AG04449 (cell line): ENCODE measurements at regions of chr7 and their contacts with region 1.

Region 1: DNA sequence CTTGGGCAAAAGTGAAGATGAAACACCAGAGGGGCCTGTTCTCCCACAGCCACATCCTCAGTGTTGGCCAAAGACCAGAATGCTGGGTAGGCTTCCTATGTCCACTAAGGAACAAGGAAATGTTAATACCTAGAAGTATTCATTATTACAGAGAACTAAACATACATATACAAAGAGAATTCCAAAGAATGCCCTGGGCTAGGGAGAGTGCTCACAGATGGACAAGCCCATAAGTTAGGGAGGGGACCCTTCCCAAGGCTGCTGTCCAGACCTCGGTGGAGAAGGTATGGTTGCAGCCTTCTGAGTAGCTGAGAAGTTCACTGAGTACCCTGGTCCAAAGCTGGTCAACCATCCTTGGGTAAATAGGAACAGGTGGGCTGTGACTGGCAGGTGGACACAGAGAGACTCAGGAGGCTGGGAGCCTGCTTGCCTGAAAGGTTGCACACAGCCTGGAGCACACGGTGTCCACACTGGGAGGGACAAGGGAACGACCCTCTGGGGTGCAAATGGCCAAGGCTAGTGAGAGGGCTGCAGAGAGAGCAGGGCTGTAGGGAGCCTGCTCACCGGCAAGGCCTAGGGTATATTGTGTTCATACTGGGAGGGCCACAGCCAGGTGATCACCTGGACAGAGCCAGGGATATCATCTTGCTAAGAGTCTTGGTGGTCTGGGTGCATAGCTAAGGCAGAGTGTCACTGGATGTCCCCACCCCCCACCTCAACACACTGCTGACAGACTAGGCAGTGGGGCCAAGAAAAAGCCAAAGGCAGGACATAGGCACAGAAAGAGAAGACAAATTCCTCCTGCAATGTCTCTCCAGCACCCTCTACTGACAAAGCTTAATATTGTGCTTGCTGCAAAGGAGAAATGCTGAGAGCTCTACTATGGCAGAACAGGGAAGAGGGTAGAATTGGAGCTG is 40.3 kb downstream of the CPVL start:
- DNase-seq: no peak
- H3K4me3 ChIP-seq: no peak overlapping the region
- CTCF ChIP-seq: peak; percentile 81

Region 2: DNA sequence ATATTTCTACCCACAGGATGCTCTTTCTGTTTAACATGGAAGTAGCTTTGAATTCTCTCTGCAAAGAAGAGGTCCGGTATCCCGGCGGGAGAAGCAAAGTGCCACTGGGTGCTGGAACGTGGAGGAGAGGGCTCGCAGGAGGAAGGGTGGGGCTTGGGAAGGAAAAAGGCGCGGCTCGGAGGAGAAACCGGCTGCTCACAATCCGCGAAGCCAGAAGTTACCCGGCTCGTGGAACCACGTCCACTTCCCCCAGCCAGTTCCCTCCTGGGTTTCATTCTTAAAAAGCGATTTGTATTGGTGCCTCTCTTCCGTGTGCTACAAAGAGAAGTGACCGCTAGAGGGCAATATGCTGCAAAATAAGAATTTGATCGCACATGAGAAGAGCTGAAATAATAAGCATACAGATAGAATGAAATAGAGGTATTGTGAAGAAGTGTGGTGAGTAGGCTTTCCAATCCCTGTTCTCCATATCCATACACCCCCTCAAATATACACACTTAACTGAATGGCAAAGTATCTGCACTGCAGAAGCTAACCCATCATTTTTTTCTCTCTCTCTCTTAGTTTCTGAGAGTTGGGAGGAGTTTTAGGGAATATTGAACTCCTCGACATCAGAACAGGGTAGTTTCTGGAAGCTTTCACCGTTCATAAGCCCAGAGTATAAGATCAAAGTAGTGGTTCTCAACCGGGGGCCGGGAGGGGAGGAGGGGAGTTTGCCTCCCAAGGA is 179.0 kb before region 1 on chr7:
- CTCF ChIA-PET with region 1: interaction called, 1,392 read pairs
- POLR2A ChIA-PET with region 1: interaction called, 6 read pairs
- DNase-seq: peak; percentile 60
- H3K4me3 ChIP-seq: peak overlapping the region; percentile 72
- CTCF ChIP-seq: peak; percentile 64

Region 3: DNA sequence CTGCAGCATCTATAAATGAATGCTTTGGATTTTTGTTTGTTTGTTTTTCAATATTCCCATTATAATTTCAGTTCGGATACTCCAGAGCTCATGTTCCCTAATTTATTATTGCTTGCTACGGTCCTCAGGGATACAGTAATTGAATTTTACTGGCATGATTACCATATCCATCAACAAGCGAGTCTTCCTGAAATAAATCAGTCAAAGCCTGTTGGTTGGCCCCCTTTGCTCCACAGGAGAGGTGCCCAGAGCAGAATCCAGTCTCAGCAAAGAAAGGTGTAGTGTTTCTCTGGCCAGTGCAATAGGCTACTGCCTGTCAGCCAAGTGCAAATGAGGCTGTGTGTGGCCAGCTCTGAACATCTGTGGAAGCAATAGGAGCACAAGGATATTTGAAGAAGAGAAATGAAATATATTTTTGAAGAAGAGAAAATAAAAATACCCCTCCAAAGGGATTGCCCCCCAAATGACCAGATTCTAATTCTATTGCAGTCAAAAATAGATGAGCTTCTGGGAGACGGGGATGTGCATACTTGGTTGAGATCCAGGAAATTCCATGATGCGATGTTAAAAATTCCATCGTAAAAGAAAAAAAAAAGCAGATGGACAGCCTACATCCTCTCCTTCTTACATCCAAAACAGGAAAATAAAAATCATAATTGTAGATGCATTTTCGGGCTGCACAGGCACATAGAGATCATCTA is 166.0 kb before region 1 on chr7:
- CTCF ChIA-PET with region 1: interaction called, 25 read pairs
- POLR2A ChIA-PET with region 1: no interaction called
- DNase-seq: no peak
- H3K4me3 ChIP-seq: no peak overlapping the region
- CTCF ChIP-seq: no peak

Region 4: DNA sequence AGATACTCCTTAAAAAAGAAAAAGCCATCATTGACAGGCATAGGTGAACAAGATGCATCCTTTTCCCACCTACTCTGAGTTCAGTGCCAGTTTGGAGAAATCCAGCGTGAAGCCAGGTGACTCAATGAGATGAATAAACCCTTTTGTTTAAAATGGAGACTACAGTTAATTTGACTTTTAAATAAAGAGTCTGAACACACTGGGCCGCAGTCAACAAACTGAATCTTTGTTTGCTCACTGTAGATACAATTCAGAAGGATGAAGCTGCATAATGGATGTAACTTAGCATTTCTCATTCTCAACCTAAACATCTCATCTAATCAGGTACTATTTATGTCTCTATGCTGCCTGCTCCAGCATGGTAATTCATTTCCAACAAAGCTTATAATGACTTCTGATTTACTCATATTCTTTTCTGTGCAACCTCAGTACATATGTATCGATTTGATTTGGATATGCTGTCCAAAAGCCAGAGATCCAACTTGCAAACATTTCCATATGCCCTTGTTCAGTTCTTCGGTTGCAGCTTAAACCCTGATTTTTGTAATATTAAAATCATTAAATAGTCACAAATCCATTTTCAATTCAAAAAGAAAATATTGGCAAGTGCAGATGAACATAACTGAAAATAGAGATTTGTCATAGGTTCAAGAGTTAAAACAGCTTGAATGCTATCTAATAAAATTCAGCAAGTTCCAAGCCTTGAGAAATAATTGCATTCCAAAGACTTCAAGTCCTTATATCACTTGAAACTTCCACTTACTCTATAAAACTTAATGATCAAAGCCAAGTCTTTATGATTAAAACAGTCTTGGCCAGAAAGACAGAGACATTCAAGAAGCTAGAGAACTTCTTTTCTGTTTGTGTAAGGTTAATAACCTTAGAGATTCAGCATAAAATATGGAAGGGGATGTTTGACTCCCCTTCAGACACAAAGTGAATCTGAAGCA is 27.4 kb before region 1 on chr7:
- CTCF ChIA-PET with region 1: interaction called, 14 read pairs
- POLR2A ChIA-PET with region 1: no interaction called
- DNase-seq: no peak
- H3K4me3 ChIP-seq: no peak overlapping the region
- CTCF ChIP-seq: no peak

Region 5: DNA sequence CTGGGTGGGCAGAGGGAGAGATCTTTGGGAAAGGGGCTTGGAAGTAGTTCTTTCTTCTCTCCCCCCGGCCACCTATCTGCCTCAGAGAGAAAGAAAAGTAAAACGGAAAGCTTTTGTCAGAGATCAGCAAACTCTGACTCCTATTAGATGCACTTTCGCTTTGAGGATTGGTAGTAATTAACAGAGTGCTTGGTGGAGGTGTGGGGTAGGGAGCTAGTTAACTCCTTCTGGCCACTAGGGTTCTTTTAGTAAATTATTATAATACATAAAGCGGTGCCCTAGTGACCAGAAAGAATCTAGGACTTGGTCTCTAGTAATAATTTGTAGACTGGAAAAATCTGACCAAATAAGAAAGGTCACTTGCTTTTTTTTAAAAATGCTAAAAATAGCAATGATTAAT is 14.3 kb before region 1 on chr7:
- CTCF ChIA-PET with region 1: interaction called, 33 read pairs
- POLR2A ChIA-PET with region 1: no interaction called
- DNase-seq: no peak
- H3K4me3 ChIP-seq: no peak overlapping the region; the same call in 1 of the 2 replicates
- CTCF ChIP-seq: no peak

Region 6: DNA sequence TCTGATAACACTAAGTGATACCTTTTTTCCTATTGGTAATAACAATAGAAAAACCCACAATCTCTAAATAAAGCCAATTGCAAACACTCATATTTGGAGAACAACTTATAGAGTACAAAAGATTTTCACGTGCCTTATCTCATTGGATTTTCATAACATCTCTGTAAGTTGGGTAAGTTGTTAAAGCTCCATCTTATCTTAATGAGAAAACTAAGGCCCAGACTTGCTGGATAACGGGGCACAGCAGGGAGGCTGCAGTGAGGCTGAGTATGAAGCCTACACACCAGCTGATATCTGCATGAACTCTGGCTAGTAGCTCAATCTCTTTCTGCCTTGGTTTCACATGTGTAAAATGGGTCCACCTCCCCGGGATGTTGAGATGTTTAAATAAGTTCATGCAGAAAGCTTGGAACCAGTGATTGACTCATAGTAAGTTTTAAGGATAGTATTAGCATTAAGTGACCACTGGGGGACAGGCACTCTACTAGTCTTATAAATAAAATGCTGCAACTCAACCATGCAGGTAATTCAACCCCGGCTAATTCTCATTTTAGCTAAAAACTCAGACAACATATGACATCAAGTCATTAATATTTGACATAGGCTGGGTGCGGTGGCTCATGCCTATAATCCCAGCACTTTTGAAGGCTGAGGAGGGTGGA is 13.7 kb after region 1 on chr7:
- CTCF ChIA-PET with region 1: interaction called, 57 read pairs
- POLR2A ChIA-PET with region 1: no interaction called
- DNase-seq: no peak
- H3K4me3 ChIP-seq: no peak overlapping the region
- CTCF ChIP-seq: no peak

Region 7: GRCh38 chr7:29408841-29409243 is 302.8 kb after region 1 on chr7:
- CTCF ChIA-PET with region 1: interaction called, 39 read pairs
- POLR2A ChIA-PET with region 1: no interaction called
- DNase-seq: peak; percentile 9
- H3K4me3 ChIP-seq: no peak overlapping the region
- CTCF ChIP-seq: peak; percentile 67

Region 8: GRCh38 chr7:29494350-29494749 is 388.3 kb after region 1 on chr7:
- CTCF ChIA-PET with region 1: no interaction called
- POLR2A ChIA-PET with region 1: no interaction called
- DNase-seq: peak; percentile 29
- H3K4me3 ChIP-seq: no peak overlapping the region
- CTCF ChIP-seq: no peak